Ascending aorta (tissue), 2 donors: ENCODE measurements at regions of chr11 and their contacts with region 1.

Region 1: GRCh38 chr11:45771566-45772448 is 33.1 kb upstream of the SLC35C1 start:
- DNase-seq: peak; percentile 20 to 92
- H3K4me3 ChIP-seq: peak overlapping the region; percentile 66 to 78
- H3K27ac ChIP-seq: peak overlapping the region; percentile 63 to 81
- H3K4me1 ChIP-seq: peaks cover 0 to 2% of the 10 kb centered on the region in 2 donors
- H3K27me3 ChIP-seq: no peaks in the 10 kb centered on the region
- CTCF ChIP-seq: peak; percentile 89 to 94 (median 93)

Region 2: GRCh38 chr11:45371251-45372115 is 400.3 kb before region 1 on chr11:
- intact Hi-C with region 1: loop called (anchors 2 kb)
- DNase-seq: peak in 1 of 2 donors; percentile 74
- H3K4me3 ChIP-seq: no peak overlapping the region
- H3K27ac ChIP-seq: no peak overlapping the region
- H3K4me1 ChIP-seq: no peaks in the 10 kb centered on the region
- H3K27me3 ChIP-seq: no peaks in the 10 kb centered on the region
- CTCF ChIP-seq: peak; percentile 65 to 89 (median 83)

Region 3: GRCh38 chr11:45538363-45538762 is 233.4 kb before region 1 on chr11:
- intact Hi-C with region 1: loop called (anchors 5 kb)
- DNase-seq: no peak
- H3K4me3 ChIP-seq: no peak overlapping the region
- H3K27ac ChIP-seq: no peak overlapping the region
- H3K4me1 ChIP-seq: no peaks in the 10 kb centered on the region
- H3K27me3 ChIP-seq: no peaks in the 10 kb centered on the region
- CTCF ChIP-seq: no peak

Region 4: DNA sequence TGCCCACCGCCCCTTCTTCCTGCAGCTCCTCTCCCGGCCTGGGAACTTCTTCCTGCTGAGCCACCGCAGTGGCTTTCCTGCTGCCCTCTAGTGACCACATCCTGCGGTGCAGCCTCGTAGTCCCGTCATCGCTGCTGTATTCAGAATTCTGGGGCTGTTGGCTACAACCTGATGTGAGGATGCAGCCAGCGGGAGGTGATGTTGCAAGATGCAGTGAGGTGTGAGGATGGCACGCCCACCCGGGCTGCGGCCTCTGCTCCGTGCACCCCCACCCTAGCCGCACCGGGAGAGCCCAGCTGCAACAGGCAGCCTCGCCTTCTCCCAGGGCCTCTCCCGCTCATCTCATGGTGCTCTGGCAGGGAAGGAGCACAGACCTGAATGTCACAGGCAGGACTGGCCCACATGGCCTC is 116.5 kb before region 1 on chr11:
- intact Hi-C with region 1: loop called (anchors 1 kb)
- DNase-seq: peak in 1 of 2 donors; percentile 84
- H3K4me3 ChIP-seq: no peak overlapping the region
- H3K27ac ChIP-seq: no peak overlapping the region
- H3K4me1 ChIP-seq: peaks cover 4 to 47% of the 10 kb centered on the region in 2 donors
- H3K27me3 ChIP-seq: no peaks in the 10 kb centered on the region
- CTCF ChIP-seq: peak; percentile 69 to 97 (median 94)

Region 5: DNA sequence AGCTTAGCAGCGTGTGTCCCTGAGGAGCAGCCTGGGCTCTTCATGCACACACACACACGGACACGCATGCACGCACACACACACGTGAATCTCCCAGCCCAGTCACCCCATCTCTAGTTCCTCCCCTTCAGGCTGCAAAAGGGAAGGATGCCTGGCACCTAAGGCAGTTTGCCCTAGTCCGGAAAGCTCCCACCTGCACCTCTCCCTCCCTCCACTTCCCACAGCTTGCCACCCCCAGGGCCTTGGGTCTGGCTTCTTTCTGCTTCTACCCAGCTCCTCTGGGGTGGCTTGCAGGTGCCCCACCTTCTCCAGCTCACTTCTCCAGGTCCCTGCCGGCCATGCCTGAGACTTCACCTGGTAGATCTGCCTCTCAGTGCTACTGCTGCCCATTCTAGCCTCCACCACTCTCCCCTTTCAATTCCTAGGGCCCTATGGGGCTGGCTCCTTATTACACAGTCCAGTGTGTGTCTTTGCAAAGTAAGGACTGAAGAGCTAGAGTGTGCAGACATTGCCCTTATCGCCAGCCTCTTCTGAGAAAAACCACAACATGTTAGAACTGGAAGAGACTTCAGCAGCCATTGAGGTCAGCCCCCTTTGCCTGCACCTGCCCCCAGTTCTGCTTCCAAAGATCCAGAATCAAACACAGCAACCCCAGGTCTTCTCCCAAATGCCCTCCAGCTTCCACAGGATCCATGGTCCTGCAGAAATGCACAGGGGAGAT is 72.9 kb before region 1 on chr11:
- intact Hi-C with region 1: no loop called
- DNase-seq: no peak
- H3K4me3 ChIP-seq: no peak overlapping the region
- H3K27ac ChIP-seq: no peak overlapping the region
- H3K4me1 ChIP-seq: no peaks in the 10 kb centered on the region
- H3K27me3 ChIP-seq: no peaks in the 10 kb centered on the region
- CTCF ChIP-seq: no peak

Region 6: DNA sequence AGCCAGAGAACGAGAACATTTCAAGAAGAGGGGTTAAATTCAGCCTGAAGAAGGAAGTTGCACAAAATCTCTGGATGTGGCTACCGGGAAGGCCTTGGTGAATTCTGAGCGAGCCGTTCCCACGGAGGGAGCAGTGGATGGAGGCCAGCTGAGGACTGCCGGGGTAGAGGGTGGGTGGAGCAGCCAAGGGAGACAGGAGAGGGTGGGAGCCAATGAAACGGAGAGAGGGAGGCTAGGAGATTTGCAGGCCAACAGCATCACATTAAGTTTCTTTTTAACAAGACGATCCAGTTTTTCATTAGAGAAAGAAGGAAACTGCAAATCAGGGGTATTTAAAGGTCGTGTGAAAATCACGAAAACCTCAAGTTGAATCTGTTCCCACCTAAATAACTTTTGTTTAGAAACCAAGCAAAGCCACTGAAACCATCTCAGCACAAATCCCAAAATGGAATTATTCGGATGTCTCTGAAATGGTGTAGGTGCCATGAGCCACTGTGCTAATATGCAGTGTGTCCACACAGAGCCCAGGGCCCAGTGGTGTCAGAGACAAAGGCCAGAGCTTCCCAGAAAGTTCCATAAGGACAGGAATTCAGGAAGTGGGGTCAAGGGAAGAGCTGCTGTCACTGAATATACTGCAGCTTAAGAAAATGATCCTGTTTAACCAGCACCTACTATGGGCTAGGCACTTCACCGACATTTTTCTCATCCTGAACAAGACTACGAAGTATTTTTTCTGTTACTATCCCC is 26.6 kb before region 1 on chr11:
- intact Hi-C with region 1: loop called (anchors 2 kb)
- DNase-seq: peak in 1 of 2 donors; percentile 89
- H3K4me3 ChIP-seq: peak overlapping the region in 1 of 2 donors; percentile 35
- H3K27ac ChIP-seq: peak overlapping the region; percentile 82 to 86
- H3K4me1 ChIP-seq: peaks cover 0 to 18% of the 10 kb centered on the region in 2 donors
- H3K27me3 ChIP-seq: no peaks in the 10 kb centered on the region
- CTCF ChIP-seq: no peak

Region 7: DNA sequence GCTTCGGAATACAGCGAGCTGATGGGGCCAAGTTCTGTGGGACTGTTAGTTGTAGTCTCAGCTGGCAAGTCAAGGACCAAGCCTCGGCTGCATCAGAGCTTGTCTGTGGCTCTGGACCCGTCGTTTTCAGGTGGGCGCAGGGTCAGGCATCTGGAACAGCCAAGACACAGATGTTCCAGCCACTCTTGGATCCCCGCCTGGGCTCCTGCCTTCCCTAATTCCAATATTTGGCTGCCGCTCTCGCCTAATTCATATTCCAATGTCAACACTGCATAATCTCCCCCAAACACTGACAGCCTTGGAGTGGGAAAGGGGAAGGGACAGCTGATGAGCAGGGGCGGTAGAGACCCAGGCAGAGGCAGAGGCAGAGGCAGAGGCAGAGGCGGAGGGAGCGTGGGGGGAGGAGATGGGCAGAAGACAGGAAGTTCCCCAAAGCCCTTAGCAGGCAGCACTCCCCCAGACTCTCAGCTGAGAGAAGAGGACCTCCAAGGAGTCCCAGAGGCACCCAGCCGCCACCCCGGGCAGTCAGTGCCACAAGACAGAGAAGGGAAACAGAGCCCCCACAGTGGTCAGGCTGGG is 16.4 kb before region 1 on chr11:
- intact Hi-C with region 1: no loop called
- DNase-seq: no peak
- H3K4me3 ChIP-seq: no peak overlapping the region
- H3K27ac ChIP-seq: peak overlapping the region; percentile 85 to 89
- H3K4me1 ChIP-seq: peaks cover 9 to 59% of the 10 kb centered on the region in 2 donors
- H3K27me3 ChIP-seq: no peaks in the 10 kb centered on the region
- CTCF ChIP-seq: no peak